ENCODE measurements at regions of chr15 and their contacts with region 1.

Region 1: GRCh38 chr15:60548101-60548500 is 69.2 kb upstream of the ICE2 start:
- DNase-seq: peak in 8 of 9 donors; percentile 26 to 64 (median 40)
- ATAC-seq: peak; percentile 69
- H3K4me3 ChIP-seq: peak overlapping the region; percentile 6
- H3K4me3 Mint-ChIP-seq: peak overlapping the region; percentile 53 to 84 (median 70)
- H3K27ac ChIP-seq: peak overlapping the region; percentile 28
- H3K27ac Mint-ChIP-seq: peak overlapping the region; percentile 77 to 96 (median 88)
- H3K4me1 ChIP-seq: peaks cover 47 to 69% of the 10 kb centered on the region in 2 donors
- H3K4me1 Mint-ChIP-seq: peaks cover 63 to 96% (median 93%) of the 10 kb centered on the region in 7 donors
- H3K27me3 ChIP-seq: no peaks in the 10 kb centered on the region
- H3K27me3 Mint-ChIP-seq: no peaks in the 10 kb centered on the region

Region 2: DNA sequence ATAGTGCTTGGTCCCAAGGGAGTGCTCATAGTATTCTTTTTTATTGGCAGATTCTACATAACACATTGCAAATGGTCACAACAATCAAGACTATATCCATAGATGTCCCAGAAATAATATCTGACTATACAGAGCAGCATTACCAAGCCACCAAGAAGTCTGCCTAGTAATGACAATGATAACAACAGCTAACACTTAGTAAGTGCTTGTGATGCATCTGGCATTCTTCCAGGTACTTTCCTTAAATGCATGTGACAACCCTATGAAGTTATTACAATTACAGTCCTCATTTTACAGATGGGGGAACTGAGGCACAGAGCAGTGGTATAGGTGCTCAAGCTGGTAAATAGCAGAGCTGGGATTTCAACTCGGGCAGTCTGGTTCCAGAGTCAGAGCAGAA is 19.6 kb before region 1 on chr15:
- CTCF ChIA-PET with region 1: interaction called, 3 read pairs
- POLR2A ChIA-PET with region 1: no interaction called
- intact Hi-C with region 1: loop called in 1 of 2 experiments (anchors 2 kb)
- DNase-seq: peak in 6 of 9 donors; percentile 22 to 66 (median 50)
- ATAC-seq: peak; percentile 82
- H3K4me3 ChIP-seq: no peak overlapping the region
- H3K4me3 Mint-ChIP-seq: peak overlapping the region in 8 of 10 donors; percentile 16 to 68 (median 30)
- H3K27ac ChIP-seq: peak overlapping the region; percentile 56
- H3K27ac Mint-ChIP-seq: peak overlapping the region; percentile 78 to 96 (median 87)
- H3K4me1 ChIP-seq: peaks cover 15 to 19% of the 10 kb centered on the region in 2 donors
- H3K4me1 Mint-ChIP-seq: peaks cover 27 to 97% (median 86%) of the 10 kb centered on the region in 7 donors
- H3K27me3 ChIP-seq: no peaks in the 10 kb centered on the region
- H3K27me3 Mint-ChIP-seq: no peaks in the 10 kb centered on the region

Region 3: GRCh38 chr15:60535743-60536142 is 12.4 kb before region 1 on chr15:
- CTCF ChIA-PET with region 1: interaction called, 4 read pairs
- POLR2A ChIA-PET with region 1: no interaction called
- intact Hi-C with region 1: loop called in 1 of 2 experiments (anchors 1 kb)
- DNase-seq: no peak
- ATAC-seq: no peak
- H3K4me3 ChIP-seq: no peak overlapping the region
- H3K4me3 Mint-ChIP-seq: peak overlapping the region in 1 of 10 donors; percentile 17
- H3K27ac ChIP-seq: no peak overlapping the region
- H3K27ac Mint-ChIP-seq: peak overlapping the region in 3 of 9 donors; percentile 8 to 72 (median 11)
- H3K4me1 ChIP-seq: peaks cover 35 to 49% of the 10 kb centered on the region in 2 donors
- H3K4me1 Mint-ChIP-seq: peaks cover 55 to 98% (median 92%) of the 10 kb centered on the region in 7 donors
- H3K27me3 ChIP-seq: no peaks in the 10 kb centered on the region
- H3K27me3 Mint-ChIP-seq: no peaks in the 10 kb centered on the region

Region 4: DNA sequence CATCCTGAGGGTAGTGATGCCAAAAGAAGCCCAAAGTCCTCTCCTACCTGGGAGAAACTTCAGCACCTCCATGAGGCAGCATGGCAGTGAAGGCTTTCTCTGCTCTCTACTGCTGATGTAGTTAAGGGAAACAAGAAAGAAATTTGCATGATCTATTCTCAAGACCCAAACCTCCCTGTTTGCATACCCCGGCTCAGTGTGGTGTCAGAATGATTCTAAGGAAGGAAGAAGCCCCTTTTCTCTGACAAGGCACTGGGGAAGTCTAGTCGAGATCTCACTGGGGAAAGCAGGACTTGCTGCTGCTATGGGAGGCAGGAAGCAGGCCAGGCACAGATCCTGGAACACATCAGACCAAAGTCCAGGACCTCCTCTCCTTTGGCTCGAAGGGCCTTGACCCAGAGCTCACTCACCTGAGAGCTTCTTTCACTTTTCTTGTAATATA is 20.2 kb after region 1 on chr15:
- CTCF ChIA-PET with region 1: interaction called, 9 read pairs
- POLR2A ChIA-PET with region 1: interaction called, 3 read pairs
- intact Hi-C with region 1: loop called (anchors 2 kb)
- DNase-seq: no peak
- ATAC-seq: no peak
- H3K4me3 ChIP-seq: no peak overlapping the region
- H3K4me3 Mint-ChIP-seq: peak overlapping the region; percentile 7 to 78 (median 62)
- H3K27ac ChIP-seq: no peak overlapping the region
- H3K27ac Mint-ChIP-seq: peak overlapping the region in 8 of 9 donors; percentile 65 to 89 (median 78)
- H3K4me1 ChIP-seq: peaks cover 80% of the 10 kb centered on the region in 2 donors
- H3K4me1 Mint-ChIP-seq: peaks cover 66 to 99% (median 93%) of the 10 kb centered on the region in 7 donors
- H3K27me3 ChIP-seq: no peaks in the 10 kb centered on the region
- H3K27me3 Mint-ChIP-seq: no peaks in the 10 kb centered on the region

Region 5: DNA sequence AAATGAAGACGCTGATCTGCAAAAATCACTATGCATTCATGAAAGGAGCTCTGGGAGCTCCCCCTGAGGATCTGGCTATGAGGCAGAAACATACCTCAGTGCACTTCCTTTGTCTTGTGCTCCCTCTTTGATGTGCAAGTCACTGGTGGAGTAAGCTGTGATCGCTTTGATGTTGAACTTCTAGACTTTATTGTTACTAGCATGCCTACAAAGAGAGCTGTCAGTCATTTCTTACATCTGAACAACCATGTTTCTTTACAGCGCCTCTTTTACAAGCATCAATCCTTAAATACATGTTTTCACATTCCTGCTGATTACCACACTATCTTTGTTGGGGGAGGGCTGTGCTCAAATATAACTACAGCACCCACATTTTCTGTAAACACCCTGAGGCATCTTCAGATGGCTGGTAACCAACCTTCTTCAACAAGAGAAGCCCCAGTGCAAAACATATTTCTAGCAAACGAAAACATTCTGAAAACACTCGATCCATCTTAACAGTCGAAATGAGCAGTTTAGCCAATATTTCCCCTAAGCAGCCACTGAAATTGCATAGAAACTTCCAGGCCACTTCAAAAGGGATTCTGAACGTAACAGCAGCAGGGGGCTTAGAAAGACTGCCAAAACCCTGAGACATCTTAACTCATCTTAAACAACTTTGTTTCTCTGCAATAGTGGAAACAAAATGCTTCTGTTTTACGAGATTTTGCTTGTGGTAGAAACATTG is 32.7 kb after region 1 on chr15:
- CTCF ChIA-PET with region 1: interaction called, 11 read pairs
- POLR2A ChIA-PET with region 1: interaction called, 6 read pairs
- intact Hi-C with region 1: loop called (anchors 1 to 2 kb)
- DNase-seq: peak in 7 of 9 donors; percentile 72 to 90 (median 86)
- ATAC-seq: peak; percentile 91
- H3K4me3 ChIP-seq: peak overlapping the region; percentile 33
- H3K4me3 Mint-ChIP-seq: peak overlapping the region; percentile 72 to 88 (median 85)
- H3K27ac ChIP-seq: peak overlapping the region; percentile 82
- H3K27ac Mint-ChIP-seq: peak overlapping the region; percentile 90 to 98 (median 96)
- H3K4me1 ChIP-seq: peaks cover 78 to 80% of the 10 kb centered on the region in 2 donors
- H3K4me1 Mint-ChIP-seq: peaks cover 58 to 99% (median 91%) of the 10 kb centered on the region in 7 donors
- H3K27me3 ChIP-seq: no peaks in the 10 kb centered on the region
- H3K27me3 Mint-ChIP-seq: no peaks in the 10 kb centered on the region